ENCODE measurements at regions of chr6 and their contacts with region 1.

Region 1: DNA sequence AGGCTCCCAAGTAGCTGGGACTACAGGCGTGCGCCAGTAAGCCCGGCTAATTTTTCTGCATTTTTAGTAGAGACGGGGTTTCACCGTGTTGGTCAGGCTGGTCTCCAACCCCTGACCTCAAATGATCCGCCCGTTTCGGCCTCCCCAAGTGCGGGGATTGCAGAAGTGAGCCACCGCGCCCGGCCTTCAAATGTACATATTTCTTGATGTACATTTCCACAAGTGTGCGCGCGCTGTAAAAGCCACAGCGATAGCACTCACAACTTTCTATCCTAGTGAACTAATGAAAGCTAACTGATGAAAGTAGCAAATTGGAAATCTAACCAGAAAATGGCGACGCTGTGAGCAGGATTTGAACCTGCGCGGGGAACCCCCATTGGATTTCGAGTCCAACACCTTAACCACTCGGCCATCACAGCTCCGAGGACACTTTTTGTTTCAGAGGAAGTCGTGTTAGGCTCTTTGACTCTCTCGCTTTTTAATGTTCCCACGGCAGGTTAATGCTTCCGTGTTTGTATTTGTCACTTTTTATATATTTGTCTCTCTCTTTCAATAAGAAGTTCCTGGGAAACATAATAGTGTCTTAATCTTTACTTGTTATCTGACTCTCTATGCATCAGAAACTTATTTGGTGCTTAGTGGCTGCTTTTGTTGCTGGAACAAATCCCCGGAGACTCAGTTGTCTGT is 199.4 kb upstream of the ZNF184 start:
- DNase-seq: peak; percentile 48
- ATAC-seq: no peak
- H3K4me3 ChIP-seq: peak overlapping the region in 1 of 5 experiments; percentile 24
- H3K4me3 Mint-ChIP-seq: peak overlapping the region; percentile 23
- H3K27ac ChIP-seq: no peak overlapping the region
- H3K27ac Mint-ChIP-seq: peak overlapping the region; percentile 41
- H3K4me1 ChIP-seq: peaks cover 21 to 22% of the 10 kb centered on the region in 2 donors
- H3K4me1 Mint-ChIP-seq: peaks cover 27% of the 10 kb centered on the region
- H3K27me3 ChIP-seq: peaks cover 0 to 75% (median 61%) of the 10 kb centered on the region in 4 experiments
- H3K27me3 Mint-ChIP-seq: peaks cover 71% of the 10 kb centered on the region
- CTCF ChIP-seq: no peak

Region 2: GRCh38 chr6:26322645-26323482 is 1349.4 kb before region 1 on chr6:
- CTCF ChIA-PET with region 1: no interaction called
- POLR2A ChIA-PET with region 1: no interaction called
- intact Hi-C with region 1: loop called (anchors 5 kb)
- DNase-seq: peak; percentile 83
- ATAC-seq: peak; percentile 59
- H3K4me3 ChIP-seq: peak overlapping the region in 4 of 5 experiments; percentile 49 to 74 (median 59)
- H3K4me3 Mint-ChIP-seq: peak overlapping the region; percentile 74
- H3K27ac ChIP-seq: no peak overlapping the region
- H3K27ac Mint-ChIP-seq: peak overlapping the region; percentile 70
- H3K4me1 ChIP-seq: peaks cover 14 to 31% of the 10 kb centered on the region in 2 donors
- H3K4me1 Mint-ChIP-seq: peaks cover 22% of the 10 kb centered on the region
- H3K27me3 ChIP-seq: peaks cover 0 to 43% (median 25%) of the 10 kb centered on the region in 4 experiments
- H3K27me3 Mint-ChIP-seq: peaks cover 26% of the 10 kb centered on the region
- CTCF ChIP-seq: no peak

Region 3: DNA sequence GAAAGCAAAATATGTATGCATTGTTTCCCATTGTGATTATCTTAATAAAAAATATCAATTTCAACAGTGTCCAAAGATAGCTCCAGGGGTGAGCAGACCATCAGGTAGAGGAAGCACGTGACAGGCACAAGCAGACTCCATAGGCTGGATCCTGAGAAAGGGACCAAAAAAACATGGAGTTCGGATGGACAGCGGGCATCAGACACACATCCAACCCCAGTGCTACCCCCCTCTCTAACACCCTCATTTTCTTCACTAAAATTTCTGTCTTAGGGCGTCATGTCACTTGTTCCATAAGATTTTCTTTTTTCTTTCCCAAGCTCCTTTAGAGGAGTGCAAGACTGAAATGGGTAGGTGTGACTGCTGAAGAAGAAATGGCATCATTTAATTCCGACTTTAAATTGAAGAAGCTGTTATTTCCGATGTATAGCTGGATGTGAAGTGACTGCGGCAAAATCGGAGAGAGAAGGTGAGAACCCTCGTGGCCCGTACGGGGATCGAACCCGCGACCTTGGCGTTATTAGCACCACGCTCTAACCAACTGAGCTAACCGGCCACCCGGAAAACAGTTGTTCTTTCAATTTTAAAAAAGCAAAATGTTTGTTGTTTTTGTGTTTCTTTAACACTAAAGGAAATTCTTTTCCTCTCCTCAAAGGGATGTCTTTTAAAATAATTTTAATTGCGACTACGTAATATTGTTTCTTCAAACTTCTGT is 435.0 kb before region 1 on chr6:
- CTCF ChIA-PET with region 1: no interaction called
- POLR2A ChIA-PET with region 1: no interaction called
- intact Hi-C with region 1: loop called (anchors 5 kb)
- DNase-seq: peak; percentile 35
- ATAC-seq: no peak
- H3K4me3 ChIP-seq: no peak overlapping the region
- H3K4me3 Mint-ChIP-seq: no peak overlapping the region
- H3K27ac ChIP-seq: no peak overlapping the region
- H3K27ac Mint-ChIP-seq: no peak overlapping the region
- H3K4me1 ChIP-seq: peaks cover 6 to 11% of the 10 kb centered on the region in 2 donors
- H3K4me1 Mint-ChIP-seq: peaks cover 5% of the 10 kb centered on the region
- H3K27me3 ChIP-seq: peaks cover 0 to 61% (median 57%) of the 10 kb centered on the region in 4 experiments
- H3K27me3 Mint-ChIP-seq: peaks cover 68% of the 10 kb centered on the region
- CTCF ChIP-seq: no peak

Region 4: DNA sequence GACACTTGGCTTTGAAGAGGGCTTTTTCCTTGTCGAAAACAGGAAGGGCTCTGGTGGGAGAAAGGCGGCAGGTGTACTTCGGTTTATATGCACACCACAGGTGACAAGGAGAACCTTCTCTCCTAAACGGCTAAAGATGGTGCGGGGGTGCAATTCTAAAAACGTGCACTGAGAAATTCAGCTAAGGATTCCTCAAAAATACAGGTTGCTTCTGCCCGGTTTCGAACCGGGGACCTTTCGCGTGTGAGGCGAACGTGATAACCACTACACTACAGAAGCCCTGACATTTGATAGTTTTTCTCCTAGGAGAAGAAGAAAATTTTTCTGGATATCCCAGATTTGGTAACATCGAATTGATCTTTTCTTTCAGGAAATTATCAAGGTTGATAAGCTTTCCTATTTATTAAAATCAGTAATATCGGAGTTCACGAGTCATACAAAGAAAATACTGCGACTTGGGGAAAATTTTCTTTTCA is 392.2 kb before region 1 on chr6:
- CTCF ChIA-PET with region 1: no interaction called
- POLR2A ChIA-PET with region 1: no interaction called
- intact Hi-C with region 1: loop called (anchors 5 kb)
- DNase-seq: no peak
- ATAC-seq: no peak
- H3K4me3 ChIP-seq: no peak overlapping the region
- H3K4me3 Mint-ChIP-seq: no peak overlapping the region
- H3K27ac ChIP-seq: no peak overlapping the region
- H3K27ac Mint-ChIP-seq: no peak overlapping the region
- H3K4me1 ChIP-seq: peaks cover 8 to 14% of the 10 kb centered on the region in 2 donors
- H3K4me1 Mint-ChIP-seq: no peaks in the 10 kb centered on the region
- H3K27me3 ChIP-seq: peaks cover 0 to 87% (median 73%) of the 10 kb centered on the region in 4 experiments
- H3K27me3 Mint-ChIP-seq: peaks cover 72% of the 10 kb centered on the region
- CTCF ChIP-seq: no peak

Region 5: DNA sequence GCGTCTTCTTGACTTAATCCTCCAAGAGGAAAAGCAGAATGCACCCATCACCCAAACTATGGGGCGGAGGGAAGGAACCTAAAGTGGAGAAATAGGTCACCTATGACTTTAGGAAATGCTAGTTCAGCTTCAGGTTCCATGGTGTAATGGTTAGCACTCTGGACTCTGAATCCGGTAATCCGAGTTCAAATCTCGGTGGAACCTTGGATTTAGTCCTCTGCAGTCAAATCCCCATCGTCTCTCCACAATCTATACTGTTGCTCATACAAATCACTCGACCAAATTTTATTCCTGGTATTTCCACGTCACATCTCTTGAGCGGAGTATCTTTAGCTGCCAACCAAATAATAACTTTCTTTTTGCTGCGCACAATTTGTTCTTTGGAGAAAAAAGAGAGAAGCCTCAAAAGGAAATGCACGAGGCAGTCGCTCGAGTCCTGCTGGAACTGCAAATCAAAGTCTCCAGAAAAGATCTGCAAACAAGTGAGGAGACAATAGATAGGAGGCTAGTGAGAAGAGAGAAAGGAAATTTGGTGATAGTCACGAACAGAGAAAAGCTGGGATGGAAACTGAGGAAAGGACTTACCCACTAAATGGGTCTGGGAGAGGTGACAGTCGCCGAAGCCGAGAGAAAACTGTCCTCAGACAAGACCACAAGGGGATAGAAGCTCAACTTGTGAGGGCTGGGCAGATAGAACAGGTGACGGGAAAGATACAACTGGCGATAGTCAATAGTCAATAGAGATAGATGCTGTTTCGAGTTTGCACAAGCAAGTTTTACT is 376.8 kb before region 1 on chr6:
- CTCF ChIA-PET with region 1: no interaction called
- POLR2A ChIA-PET with region 1: no interaction called
- intact Hi-C with region 1: loop called (anchors 5 kb)
- DNase-seq: no peak
- ATAC-seq: no peak
- H3K4me3 ChIP-seq: no peak overlapping the region
- H3K4me3 Mint-ChIP-seq: no peak overlapping the region
- H3K27ac ChIP-seq: no peak overlapping the region
- H3K27ac Mint-ChIP-seq: peak overlapping the region; percentile 60
- H3K4me1 ChIP-seq: no peaks in the 10 kb centered on the region
- H3K4me1 Mint-ChIP-seq: no peaks in the 10 kb centered on the region
- H3K27me3 ChIP-seq: peaks cover 2 to 73% (median 72%) of the 10 kb centered on the region in 4 experiments
- H3K27me3 Mint-ChIP-seq: peaks cover 87% of the 10 kb centered on the region
- CTCF ChIP-seq: no peak

Region 6: DNA sequence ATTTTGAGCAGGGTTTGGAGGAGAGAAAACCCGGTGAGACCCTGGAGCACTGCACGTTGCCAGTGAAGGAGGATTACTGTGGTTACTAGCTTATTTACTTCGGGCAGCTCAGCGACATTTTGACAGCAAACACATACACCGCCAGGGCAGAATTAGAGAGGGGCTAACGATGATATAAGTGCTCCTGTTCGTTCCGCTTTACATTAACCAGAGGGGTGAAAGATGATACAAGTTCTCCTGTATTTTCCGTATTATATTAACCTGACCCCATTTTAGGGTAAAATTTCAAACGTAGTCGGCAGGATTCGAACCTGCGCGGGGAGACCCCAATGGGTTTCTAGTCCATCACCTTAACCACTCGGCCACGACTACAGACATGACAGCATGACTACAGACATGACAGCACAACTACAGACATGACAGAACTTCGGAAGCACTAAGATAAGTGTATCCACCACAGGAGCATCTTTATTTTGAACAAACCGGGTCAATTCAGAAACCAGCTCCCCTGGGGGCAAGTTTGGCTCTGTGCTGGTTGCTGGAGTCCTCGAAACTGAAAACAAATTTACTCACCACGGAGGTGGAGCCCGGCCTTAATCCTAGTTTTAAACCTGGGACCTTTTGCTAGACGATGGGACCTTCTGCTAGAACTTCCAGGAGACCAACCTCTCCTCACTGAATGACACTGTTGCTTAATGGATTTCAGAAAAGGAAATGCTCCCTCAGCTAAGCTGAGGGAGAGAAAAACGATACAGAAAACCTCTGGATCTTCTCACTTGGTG is 118.9 kb before region 1 on chr6:
- CTCF ChIA-PET with region 1: no interaction called
- POLR2A ChIA-PET with region 1: no interaction called
- intact Hi-C with region 1: loop called (anchors 5 kb)
- DNase-seq: peak; percentile 36
- ATAC-seq: no peak
- H3K4me3 ChIP-seq: no peak overlapping the region
- H3K4me3 Mint-ChIP-seq: peak overlapping the region; percentile 54
- H3K27ac ChIP-seq: no peak overlapping the region
- H3K27ac Mint-ChIP-seq: no peak overlapping the region
- H3K4me1 ChIP-seq: peaks cover 3 to 15% of the 10 kb centered on the region in 2 donors
- H3K4me1 Mint-ChIP-seq: peaks cover 10% of the 10 kb centered on the region
- H3K27me3 ChIP-seq: peaks cover 1 to 65% (median 54%) of the 10 kb centered on the region in 4 experiments
- H3K27me3 Mint-ChIP-seq: peaks cover 64% of the 10 kb centered on the region
- CTCF ChIP-seq: no peak

Region 7: DNA sequence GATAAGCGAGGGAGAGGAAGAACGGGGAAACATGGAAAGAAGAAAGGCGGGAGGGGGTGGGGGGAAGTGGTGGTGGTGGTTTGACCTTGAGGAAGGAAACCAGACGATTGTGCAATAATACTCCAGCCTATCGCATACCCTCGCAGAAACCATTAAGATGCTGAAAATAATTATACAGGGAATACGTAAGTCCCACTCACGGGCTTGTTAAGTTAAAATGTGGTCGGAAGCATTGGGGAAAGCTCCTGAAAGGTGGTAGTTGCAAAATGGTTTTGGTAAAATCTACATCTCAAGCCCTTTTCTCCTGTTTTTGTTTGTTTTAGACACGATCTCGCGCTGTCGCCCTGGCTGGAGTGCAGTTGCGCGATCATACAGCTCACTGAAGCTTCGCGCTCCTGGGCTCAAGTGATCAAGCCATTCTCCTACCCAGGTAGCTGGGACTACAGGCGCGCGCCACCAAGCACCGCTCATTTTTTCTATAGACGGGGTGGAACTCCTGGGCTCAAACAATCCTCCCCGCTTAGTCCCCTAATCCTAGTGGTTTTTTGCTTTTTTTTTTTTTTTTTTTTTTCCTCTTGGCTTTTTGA is 70.5 kb before region 1 on chr6:
- CTCF ChIA-PET with region 1: no interaction called
- POLR2A ChIA-PET with region 1: no interaction called
- intact Hi-C with region 1: loop called (anchors 5 kb)
- DNase-seq: peak; percentile 31
- ATAC-seq: no peak
- H3K4me3 ChIP-seq: no peak overlapping the region
- H3K4me3 Mint-ChIP-seq: no peak overlapping the region
- H3K27ac ChIP-seq: no peak overlapping the region
- H3K27ac Mint-ChIP-seq: no peak overlapping the region
- H3K4me1 ChIP-seq: peaks cover 0 to 12% of the 10 kb centered on the region in 2 donors
- H3K4me1 Mint-ChIP-seq: peaks cover 8% of the 10 kb centered on the region
- H3K27me3 ChIP-seq: peaks cover 0 to 68% (median 45%) of the 10 kb centered on the region in 4 experiments
- H3K27me3 Mint-ChIP-seq: peaks cover 63% of the 10 kb centered on the region
- CTCF ChIP-seq: no peak

Region 8: GRCh38 chr6:28474441-28475219 is 802.4 kb after region 1 on chr6:
- CTCF ChIA-PET with region 1: no interaction called
- POLR2A ChIA-PET with region 1: no interaction called
- intact Hi-C with region 1: no loop called
- DNase-seq: no peak
- ATAC-seq: no peak
- H3K4me3 ChIP-seq: no peak overlapping the region
- H3K4me3 Mint-ChIP-seq: no peak overlapping the region
- H3K27ac ChIP-seq: no peak overlapping the region
- H3K27ac Mint-ChIP-seq: no peak overlapping the region
- H3K4me1 ChIP-seq: peaks cover 3 to 8% of the 10 kb centered on the region in 2 donors
- H3K4me1 Mint-ChIP-seq: peaks cover 7% of the 10 kb centered on the region
- H3K27me3 ChIP-seq: peaks cover 0 to 36% (median 18%) of the 10 kb centered on the region in 4 experiments
- H3K27me3 Mint-ChIP-seq: peaks cover 60% of the 10 kb centered on the region
- CTCF ChIP-seq: no peak